AG04450 (cell line): ENCODE measurements at regions of chr1 and their contacts with region 1.

Region 1: GRCh38 chr1:6646499-6647148 is 22.0 kb downstream of the THAP3 start:
- DNase-seq: no peak
- H3K4me3 ChIP-seq: no peak overlapping the region
- H3K27ac ChIP-seq: no peak overlapping the region
- H3K27me3 ChIP-seq: no peaks in the 10 kb centered on the region
- CTCF ChIP-seq: peak; percentile 69

Region 2: DNA sequence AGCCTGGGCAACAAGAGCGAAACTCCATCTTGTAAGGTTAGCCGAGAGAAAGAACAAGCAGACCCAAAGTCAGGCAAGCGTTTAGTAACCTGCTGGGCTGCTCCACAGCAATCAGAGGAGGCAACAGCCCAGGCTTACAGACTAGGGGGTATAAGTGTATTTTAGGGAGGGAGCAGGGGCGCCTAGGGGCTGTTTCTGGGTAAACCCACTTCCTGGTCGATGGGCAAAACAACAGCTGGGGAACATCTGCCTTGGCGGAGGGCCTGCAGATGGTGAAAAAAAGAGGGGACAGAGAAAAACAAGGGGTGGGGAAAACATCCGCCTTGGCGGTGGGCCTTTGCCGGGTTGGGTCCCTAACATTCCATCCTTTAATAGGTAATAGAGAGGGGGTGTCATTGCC is 86.4 kb before region 1 on chr1:
- CTCF ChIA-PET with region 1: interaction called, 34 read pairs
- POLR2A ChIA-PET with region 1: no interaction called
- DNase-seq: no peak
- H3K4me3 ChIP-seq: no peak overlapping the region
- H3K27ac ChIP-seq: no peak overlapping the region
- H3K27me3 ChIP-seq: peaks cover 21% of the 10 kb centered on the region
- CTCF ChIP-seq: no peak

Region 3: GRCh38 chr1:6657138-6657537 is 10.5 kb after region 1 on chr1:
- CTCF ChIA-PET with region 1: interaction called, 21 read pairs
- POLR2A ChIA-PET with region 1: interaction called, 4 read pairs
- DNase-seq: no peak
- H3K4me3 ChIP-seq: no peak overlapping the region
- H3K27ac ChIP-seq: no peak overlapping the region
- H3K27me3 ChIP-seq: no peaks in the 10 kb centered on the region
- CTCF ChIP-seq: no peak

Region 4: GRCh38 chr1:6743189-6744101 is 96.8 kb after region 1 on chr1:
- CTCF ChIA-PET with region 1: no interaction called
- POLR2A ChIA-PET with region 1: interaction called, 10 read pairs
- DNase-seq: peak; percentile 36
- H3K4me3 ChIP-seq: 0 out of 2 replicates have a peak overlapping the region, but pooled peaks have one; percentile 13
- H3K27ac ChIP-seq: peak overlapping the region; percentile 73
- H3K27me3 ChIP-seq: peaks cover 5% of the 10 kb centered on the region
- CTCF ChIP-seq: no peak